Adrenal gland (tissue), 19 donors: ENCODE measurements at regions of chr9 and their contacts with region 1.

Region 1: DNA sequence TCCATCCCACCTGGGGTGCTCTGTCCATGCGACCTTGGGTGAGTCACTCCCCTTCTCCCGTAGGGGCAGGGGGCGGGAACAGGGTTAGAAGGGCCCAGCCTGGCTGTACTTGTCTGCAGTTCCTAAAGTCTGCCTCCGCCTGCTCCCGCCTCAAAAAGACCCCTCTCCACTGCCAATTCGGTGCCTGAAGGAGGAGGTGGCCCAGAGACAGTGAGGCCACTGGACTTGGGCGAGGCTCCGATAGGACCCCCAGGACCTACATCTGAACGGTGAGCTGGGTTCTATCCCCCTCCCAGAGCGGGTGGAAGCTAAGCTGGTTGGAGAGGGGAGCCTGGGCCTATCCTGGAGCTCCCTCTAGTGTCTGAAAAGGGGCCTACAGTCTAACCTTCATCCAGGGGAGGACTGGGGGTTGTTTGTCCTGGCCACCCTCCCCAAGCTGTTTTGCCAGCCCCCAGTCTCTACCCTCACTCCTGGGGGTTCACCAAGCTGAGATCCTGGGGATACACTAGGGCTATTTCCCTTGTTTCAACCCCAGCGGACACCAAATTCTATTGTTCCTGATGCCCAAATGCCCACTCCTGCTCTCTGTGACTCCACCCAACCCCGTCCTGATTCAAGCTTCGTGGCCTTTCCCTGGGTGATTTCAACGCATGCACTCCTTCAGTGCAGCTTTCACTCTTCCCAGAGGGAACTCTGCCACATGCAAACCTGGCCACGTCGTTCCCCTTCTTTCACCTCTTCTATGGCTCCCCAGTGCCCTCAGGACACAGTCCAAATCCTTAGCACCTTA is 6.1 kb upstream of the CRB2 start:
- DNase-seq: peak; percentile 46 to 69 (median 64)
- H3K4me3 ChIP-seq: no peak overlapping the region
- H3K27ac ChIP-seq: no peak overlapping the region
- H3K4me1 ChIP-seq: no peaks in the 10 kb centered on the region
- H3K27me3 ChIP-seq: peaks cover 36% of the 10 kb centered on the region
- CTCF ChIP-seq: peak; percentile 82 to 95 (median 91)
- POLR2A ChIP-seq: no peak

Region 2: GRCh38 chr9:123087359-123087888 is 262.5 kb before region 1 on chr9:
- intact Hi-C with region 1: loop called in 1 of 2 experiments (anchors 5 kb)
- DNase-seq: no peak
- H3K4me3 ChIP-seq: no peak overlapping the region
- H3K27ac ChIP-seq: no peak overlapping the region
- H3K4me1 ChIP-seq: no peaks in the 10 kb centered on the region
- H3K27me3 ChIP-seq: no peaks in the 10 kb centered on the region
- CTCF ChIP-seq: no peak
- POLR2A ChIP-seq: no peak

Region 3: DNA sequence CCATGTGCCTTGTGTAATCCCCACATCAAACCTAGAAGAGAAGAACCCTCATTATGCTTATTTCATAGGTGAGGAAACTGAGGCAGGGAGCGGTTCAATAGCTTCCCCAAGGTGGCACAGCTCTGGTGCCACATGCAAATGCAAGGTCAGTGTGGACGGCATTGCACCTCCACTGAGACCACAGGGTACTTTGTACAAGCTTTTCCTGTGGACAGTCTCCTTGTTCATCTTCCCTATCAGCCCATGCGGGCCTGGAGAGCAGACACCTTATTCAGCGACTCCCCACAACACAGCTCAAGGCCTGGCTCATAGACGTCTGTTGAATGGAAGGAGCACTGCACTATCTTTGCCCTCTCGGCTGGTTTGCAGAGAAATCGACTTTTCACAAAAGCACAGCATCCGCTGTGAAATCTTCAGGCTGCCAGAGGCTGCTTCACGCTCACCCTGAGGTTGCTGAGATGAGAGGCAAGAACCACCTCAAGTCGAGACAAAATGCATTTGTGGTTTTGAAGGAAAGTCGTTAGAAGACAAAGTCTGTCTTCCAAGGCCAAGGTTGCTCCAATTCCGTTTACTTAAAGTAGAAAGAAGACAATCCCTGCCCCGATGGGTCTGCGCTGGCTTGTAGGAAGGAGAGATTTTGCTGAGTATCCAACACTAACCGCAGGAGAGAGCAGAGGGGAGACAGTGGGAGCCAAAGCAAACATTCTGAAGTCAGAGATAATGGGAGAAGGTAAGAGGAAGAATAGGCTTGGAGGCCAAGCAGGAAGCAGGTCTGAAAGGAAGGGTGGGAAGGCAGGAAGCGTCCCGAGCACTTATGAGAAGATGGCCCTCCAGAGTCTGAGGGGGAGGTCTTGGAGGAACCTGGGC is 47.3 kb before region 1 on chr9:
- intact Hi-C with region 1: no loop called
- DNase-seq: no peak
- H3K4me3 ChIP-seq: no peak overlapping the region
- H3K27ac ChIP-seq: no peak overlapping the region
- H3K4me1 ChIP-seq: no peaks in the 10 kb centered on the region
- H3K27me3 ChIP-seq: no peaks in the 10 kb centered on the region
- CTCF ChIP-seq: no peak
- POLR2A ChIP-seq: no peak